Cardiac septum (tissue), 1 donor: ENCODE measurements at regions of chr1 and their contacts with region 1.

Region 1: GRCh38 chr1:201565024-201565730 is 26.2 kb downstream of the NAV1 start:
- DNase-seq: no peak

Region 2: DNA sequence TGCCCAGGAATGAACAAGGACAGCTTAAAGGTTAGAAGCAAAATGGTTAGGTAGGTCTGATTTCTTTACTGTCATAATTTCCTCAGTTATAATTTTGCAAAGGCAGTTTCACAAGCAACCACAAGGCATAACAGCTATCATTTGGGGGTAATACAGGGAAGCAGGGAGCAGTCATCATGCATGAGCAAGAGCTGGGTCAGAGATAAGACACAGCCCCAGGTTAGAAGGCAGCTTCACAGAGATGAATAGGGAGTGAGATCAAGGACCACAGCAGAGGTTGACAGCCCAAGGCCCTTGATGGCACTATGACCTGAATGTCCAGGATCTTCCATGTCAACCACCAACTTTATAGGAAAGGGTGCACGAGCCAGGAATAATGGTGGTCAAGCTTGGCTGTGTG is 49.3 kb before region 1 on chr1:
- intact Hi-C with region 1: no loop called
- DNase-seq: no peak

Region 3: GRCh38 chr1:201625226-201625761 is 60.1 kb after region 1 on chr1:
- intact Hi-C with region 1: loop called (anchors 5 kb)
- DNase-seq: no peak